Dendritic cell treated with granulocyte-macrophage colony-stimulating factor and Interleukin-4, amounts not matched to agents 40 ng/mL and 50 ng/mL, for 4 days (primary cell): ENCODE measurements at regions of chr1 and their contacts with region 1.

Region 1: DNA sequence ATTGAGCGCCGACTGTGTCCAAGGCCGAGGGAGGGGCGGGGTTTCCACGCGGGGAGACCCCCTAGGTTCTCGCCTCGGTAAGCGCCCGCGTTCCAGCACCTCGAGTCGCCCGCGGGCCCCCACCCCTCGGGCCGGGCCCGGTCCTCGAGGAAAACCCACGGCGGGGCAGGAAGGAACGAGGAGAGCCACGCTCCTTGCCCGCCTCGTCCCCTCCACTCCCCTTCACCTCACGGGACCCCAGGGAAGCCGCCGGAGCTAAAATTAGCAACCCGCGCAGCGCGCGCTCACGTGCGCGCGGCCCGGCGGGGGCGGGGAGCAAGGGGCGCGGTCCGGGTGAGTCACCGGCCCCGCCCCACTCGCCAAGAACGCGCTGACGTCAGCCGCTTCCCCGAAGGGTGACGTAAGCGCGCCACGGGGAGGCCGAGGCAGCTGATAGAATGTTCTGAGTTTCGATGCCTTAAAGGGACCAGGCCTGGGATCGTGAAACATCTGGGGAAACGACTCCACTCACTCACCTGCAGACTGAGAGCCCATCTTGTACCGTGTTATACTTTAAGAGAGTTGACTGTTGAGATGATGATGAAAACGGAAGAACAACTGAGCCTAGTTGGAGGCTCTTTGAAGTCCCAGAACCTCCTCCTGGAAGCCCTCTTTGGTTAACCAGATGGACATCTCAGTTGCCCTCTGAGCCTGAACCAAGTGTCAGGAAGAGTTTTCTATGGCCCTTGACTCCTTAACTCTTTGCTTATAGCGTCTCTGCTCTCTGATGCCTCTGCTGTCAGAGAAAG is 49.7 kb upstream of the ATF3 start:
- H3K4me3 Mint-ChIP-seq: peak overlapping the region; percentile 82
- H3K27ac Mint-ChIP-seq: peak overlapping the region; percentile 96
- H3K4me1 Mint-ChIP-seq: peaks cover 38% of the 10 kb centered on the region
- H3K27me3 Mint-ChIP-seq: peaks cover 4% of the 10 kb centered on the region

Region 2: DNA sequence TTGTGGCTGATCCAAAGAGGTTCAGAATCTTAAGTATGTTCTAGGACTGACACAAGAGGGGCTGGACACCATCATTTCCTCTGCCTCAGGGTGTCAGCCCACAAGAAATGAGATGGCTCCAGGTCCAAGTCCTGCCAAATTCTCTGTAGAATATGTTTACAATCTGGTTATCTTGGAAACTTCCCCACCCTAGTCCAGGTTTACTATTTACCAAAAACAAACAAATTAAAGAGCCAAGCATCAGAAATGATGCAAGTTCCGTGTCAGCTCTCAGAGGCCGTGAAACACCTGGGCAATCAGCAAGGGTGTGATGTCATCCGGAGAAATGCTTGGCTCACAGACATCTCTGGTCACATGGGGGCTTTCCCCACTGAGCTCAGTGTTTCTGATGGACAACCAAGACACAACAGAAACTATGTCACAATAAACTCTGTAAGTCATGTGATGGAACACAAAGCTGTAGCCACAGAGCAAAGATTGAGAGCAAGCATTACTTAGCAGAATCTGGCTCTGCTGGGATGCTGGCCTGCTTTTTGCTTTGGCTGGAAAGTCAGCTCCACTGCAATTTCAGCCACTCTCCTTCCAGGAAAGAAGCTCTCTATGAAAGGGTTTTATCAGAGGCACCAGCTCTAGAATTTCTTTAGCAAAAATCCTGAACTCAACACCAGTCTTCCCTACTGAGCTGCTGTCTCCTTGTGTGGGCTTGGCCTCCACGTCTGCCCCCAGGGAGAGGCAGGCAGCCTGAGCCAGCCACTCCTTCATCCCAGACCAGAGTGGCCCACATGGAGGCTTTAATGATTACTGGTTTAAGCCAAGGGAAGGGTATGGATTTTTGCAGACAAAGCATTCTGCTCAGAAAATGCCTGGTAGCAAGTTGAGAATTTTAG is 70.2 kb before region 1 on chr1:
- intact Hi-C with region 1: loop called (anchors 2 kb)
- H3K4me3 Mint-ChIP-seq: no peak overlapping the region
- H3K27ac Mint-ChIP-seq: peak overlapping the region; percentile 83
- H3K4me1 Mint-ChIP-seq: peaks cover 87% of the 10 kb centered on the region
- H3K27me3 Mint-ChIP-seq: no peaks in the 10 kb centered on the region

Region 3: GRCh38 chr1:212542761-212543187 is 16.1 kb before region 1 on chr1:
- intact Hi-C with region 1: loop called (anchors 1 kb)
- H3K4me3 Mint-ChIP-seq: no peak overlapping the region
- H3K27ac Mint-ChIP-seq: peak overlapping the region; percentile 67
- H3K4me1 Mint-ChIP-seq: peaks cover 27% of the 10 kb centered on the region
- H3K27me3 Mint-ChIP-seq: no peaks in the 10 kb centered on the region

Region 4: DNA sequence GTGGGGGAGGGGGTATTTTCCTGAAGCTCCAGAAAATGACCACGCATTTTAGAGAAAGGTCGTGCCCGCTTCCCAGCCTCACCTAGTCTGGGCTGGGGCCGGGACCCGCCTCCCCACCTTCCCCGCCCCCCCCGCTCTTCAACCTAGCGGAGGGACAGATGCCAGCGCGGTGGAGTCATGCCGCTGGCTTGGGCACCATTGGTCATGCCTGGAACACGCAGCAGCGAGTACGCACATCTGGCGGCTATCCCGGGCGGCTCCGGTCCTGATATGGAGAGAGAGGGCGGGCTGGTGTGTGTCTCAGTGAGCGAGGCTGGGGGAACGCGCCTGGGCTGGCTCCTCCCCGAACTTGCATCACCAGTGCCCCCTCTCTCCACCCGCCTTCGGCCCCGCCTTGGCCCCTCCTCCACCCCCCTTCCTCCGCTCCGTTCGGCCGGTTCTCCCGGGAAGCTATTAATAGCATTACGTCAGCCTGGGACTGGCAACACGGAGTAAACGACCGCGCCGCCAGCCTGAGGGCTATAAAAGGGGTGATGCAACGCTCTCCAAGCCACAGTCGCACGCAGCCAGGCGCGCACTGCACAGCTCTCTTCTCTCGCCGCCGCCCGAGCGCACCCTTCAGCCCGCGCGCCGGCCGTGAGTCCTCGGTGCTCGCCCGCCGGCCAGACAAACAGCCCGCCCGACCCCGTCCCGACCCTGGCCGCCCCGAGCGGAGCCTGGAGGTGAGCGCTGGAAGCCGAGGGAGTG is 49.5 kb after region 1 on chr1 and contains the start of gene ATF3:
- intact Hi-C with region 1: loop called (anchors 2 kb)
- H3K4me3 Mint-ChIP-seq: peak within 1 kb of the TSS; percentile 91
- H3K27ac Mint-ChIP-seq: peak within 1 kb of the TSS; percentile 96
- H3K4me1 Mint-ChIP-seq: peaks cover 64% of the 10 kb centered on the region
- H3K27me3 Mint-ChIP-seq: peaks cover 60% of the 10 kb centered on the region